Psoas muscle (tissue), 8 donors: ENCODE measurements at regions of chr10 and their contacts with region 1.

Region 1: GRCh38 chr10:122307669-122308486 is 36.8 kb downstream of the BTBD16 start:
- DNase-seq: peak; percentile 72 to 74
- ATAC-seq: peak; percentile 85 to 94 (median 90)
- H3K4me3 ChIP-seq: peak overlapping the region; percentile 36
- H3K27ac ChIP-seq: peak overlapping the region; percentile 85
- H3K4me1 ChIP-seq: peaks cover 24% of the 10 kb centered on the region
- H3K27me3 ChIP-seq: no peaks in the 10 kb centered on the region
- CTCF ChIP-seq: no peak

Region 2: DNA sequence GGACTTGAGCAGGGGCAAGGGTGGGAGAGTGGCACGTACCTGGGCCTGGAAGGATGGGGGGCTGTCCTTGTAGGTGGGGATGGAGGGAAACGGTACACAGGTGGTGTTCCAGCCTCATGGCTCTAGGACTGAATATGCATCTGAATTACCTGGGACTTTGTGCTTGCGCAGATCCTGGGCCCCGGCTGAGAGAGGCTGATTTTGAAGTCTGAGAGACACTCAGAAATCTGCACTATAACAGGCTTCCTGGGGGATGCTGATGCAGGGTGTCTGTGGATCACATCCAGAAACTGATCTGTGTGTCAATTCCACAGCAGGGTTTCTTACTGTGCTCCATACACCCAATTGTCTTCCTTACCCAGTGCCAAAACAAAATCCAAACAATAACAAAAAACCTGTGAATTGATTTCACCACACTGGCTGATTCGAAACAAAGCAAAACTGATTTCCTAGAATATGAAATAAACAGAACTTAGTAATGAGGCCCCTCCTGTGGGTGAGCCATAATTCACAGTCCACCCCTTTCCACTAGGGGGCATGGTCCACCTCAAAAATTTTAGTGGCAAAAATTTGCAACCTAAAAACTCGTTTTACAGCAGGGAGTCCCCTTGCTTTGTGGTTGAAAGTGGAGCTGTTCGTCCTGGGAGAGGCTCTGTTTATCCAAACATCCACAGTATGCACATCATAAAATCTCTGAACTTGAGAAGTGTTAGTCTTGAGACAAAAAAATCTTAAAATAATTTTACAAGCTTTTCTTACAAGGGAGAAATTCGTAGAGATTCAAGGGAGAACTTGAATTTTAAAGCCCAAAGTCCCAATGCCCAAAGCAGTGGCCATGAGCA is 34.6 kb after region 1 on chr10:
- intact Hi-C with region 1: loop called in 1 of 2 experiments (anchors 5 kb)
- DNase-seq: no peak
- ATAC-seq: peak; percentile 42 to 72 (median 52)
- H3K4me3 ChIP-seq: no peak overlapping the region
- H3K27ac ChIP-seq: no peak overlapping the region
- H3K4me1 ChIP-seq: peaks cover 8% of the 10 kb centered on the region
- H3K27me3 ChIP-seq: no peaks in the 10 kb centered on the region
- CTCF ChIP-seq: peak; percentile 73

Region 3: GRCh38 chr10:122352817-122353525 is 45.1 kb after region 1 on chr10:
- intact Hi-C with region 1: no loop called
- DNase-seq: no peak
- ATAC-seq: no peak
- H3K4me3 ChIP-seq: no peak overlapping the region
- H3K27ac ChIP-seq: no peak overlapping the region
- H3K4me1 ChIP-seq: no peaks in the 10 kb centered on the region
- H3K27me3 ChIP-seq: no peaks in the 10 kb centered on the region
- CTCF ChIP-seq: no peak